Activated CD8-positive, alpha-beta memory T cell treated with anti-CD3 and anti-CD28 coated beads, Interleukin-2, amount 10 ng/mL, durations not matched to agents 7 days and 5 days (primary cell): ENCODE measurements at regions of chr1 and their contacts with region 1.

Region 1: GRCh38 chr1:8848663-8849386 is 29.7 kb downstream of the ENO1 start:
- DNase-seq: peak; percentile 82
- ATAC-seq: peak; percentile 94
- H3K4me3 Mint-ChIP-seq: no peak overlapping the region
- H3K27ac Mint-ChIP-seq: no peak overlapping the region
- H3K4me1 Mint-ChIP-seq: peaks cover 8% of the 10 kb centered on the region
- H3K27me3 Mint-ChIP-seq: peaks cover 2% of the 10 kb centered on the region

Region 2: DNA sequence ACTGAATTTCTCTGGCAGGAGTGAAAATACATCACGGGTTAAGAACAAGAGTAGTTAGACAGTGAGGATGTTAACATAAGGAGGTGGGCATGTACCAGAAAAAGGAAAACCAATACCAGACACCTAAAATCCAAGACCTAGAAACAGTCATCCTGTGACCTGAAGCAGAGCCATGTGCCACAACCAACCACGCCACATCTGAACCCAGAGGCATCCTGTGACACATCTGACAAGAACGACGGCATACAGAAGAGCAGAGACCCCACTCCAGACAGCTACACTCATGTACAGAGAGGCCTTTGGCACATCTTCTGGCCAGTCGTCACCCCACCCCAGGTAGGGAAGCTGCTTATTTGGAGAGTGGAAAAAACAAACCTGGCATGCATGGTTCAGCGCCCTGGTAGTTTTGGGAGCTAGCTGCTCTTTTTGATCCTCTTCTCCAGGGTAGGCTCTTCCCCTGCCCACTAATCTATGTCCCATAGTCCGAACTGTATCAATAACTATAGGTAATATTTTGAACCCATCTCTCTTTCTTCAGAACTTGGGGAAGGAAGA is 458.8 kb before region 1 on chr1:
- CTCF ChIA-PET with region 1: no interaction called
- DNase-seq: peak; percentile 65
- ATAC-seq: peak; percentile 71
- H3K4me3 Mint-ChIP-seq: no peak overlapping the region
- H3K27ac Mint-ChIP-seq: no peak overlapping the region
- H3K4me1 Mint-ChIP-seq: peaks cover 44% of the 10 kb centered on the region
- H3K27me3 Mint-ChIP-seq: no peaks in the 10 kb centered on the region

Region 3: DNA sequence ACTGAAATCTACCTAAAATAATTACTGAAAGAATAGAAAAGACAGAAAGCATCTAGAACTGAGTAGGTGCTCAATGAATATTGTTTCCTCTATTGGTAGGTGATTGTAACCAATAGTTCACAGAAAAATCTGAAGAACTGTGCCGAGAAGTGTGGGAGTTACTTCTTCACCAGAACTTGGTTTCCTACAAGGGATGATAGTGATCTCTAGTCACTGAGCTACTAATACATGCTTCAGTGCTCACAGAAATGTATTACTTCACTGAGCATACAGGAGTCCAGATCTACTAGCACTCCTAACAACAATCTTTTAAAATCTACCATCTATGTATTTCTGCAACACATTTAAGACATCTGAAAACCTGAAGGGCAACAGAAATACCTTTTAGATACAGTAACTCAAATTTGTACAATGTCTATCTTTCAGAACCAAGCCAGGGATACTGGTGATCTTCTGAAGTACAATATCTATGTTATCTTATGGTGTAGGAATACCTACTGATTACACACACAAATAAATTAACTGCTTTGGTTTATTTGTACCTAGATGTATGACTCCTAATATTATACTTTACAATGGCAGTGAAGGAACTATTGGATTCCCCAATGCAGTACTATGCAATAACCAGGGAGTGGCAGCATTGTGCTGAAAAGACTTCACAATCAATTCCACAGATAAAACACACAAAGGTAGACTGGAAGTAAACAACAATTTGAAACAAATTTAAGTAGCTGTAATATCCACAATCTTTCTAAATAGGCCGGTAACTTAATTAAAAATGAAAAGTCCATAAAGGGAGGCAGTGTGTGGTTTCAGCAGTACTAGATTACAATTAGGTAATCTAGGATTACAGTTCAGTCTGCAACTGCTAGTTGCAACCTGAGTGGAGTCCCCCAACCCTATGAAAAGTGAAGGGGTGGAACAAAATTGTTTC is 287.9 kb before region 1 on chr1:
- CTCF ChIA-PET with region 1: interaction called, 25 read pairs
- DNase-seq: no peak
- ATAC-seq: peak; percentile 80
- H3K4me3 Mint-ChIP-seq: no peak overlapping the region
- H3K27ac Mint-ChIP-seq: peak overlapping the region; percentile 12
- H3K4me1 Mint-ChIP-seq: peaks cover 17% of the 10 kb centered on the region
- H3K27me3 Mint-ChIP-seq: no peaks in the 10 kb centered on the region

Region 4: DNA sequence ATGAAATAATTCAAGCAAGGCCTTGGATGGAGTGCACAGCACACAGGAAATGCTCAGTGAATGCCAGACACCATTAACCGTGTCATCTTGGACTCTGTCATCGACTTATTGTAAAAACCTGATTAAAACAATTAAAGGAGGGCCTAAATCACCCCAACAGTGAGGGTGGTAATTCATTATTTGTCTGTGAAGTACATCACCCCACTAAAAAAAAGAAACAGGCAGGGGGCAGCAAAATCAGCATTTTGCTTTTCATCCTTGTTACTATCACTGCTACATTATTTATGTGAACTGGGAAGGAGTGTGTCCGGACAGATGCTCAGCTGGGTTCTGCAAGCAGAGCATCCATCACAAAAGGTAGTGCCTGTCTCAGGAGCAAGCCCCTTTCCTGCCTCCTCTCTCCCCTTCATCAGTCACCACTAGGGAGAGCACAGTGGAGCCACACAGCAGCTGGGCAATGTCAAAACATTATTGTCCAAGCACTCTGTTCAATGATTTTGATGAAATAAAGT is 129.9 kb before region 1 on chr1:
- CTCF ChIA-PET with region 1: interaction called, 12 read pairs
- DNase-seq: no peak
- ATAC-seq: no peak
- H3K4me3 Mint-ChIP-seq: no peak overlapping the region
- H3K27ac Mint-ChIP-seq: no peak overlapping the region
- H3K4me1 Mint-ChIP-seq: peaks cover 13% of the 10 kb centered on the region
- H3K27me3 Mint-ChIP-seq: no peaks in the 10 kb centered on the region

Region 5: GRCh38 chr1:8727809-8728213 is 121.0 kb before region 1 on chr1:
- CTCF ChIA-PET with region 1: interaction called, 20 read pairs
- DNase-seq: no peak
- ATAC-seq: no peak
- H3K4me3 Mint-ChIP-seq: no peak overlapping the region
- H3K27ac Mint-ChIP-seq: no peak overlapping the region
- H3K4me1 Mint-ChIP-seq: peaks cover 20% of the 10 kb centered on the region
- H3K27me3 Mint-ChIP-seq: no peaks in the 10 kb centered on the region

Region 6: GRCh38 chr1:8817406-8818324 is 31.2 kb before region 1 on chr1 and contains the start of gene RERE:
- CTCF ChIA-PET with region 1: interaction called, 17 read pairs
- DNase-seq: peak; percentile 95
- ATAC-seq: peak; percentile 96
- H3K4me3 Mint-ChIP-seq: peak within 1 kb of the TSS; percentile 91
- H3K27ac Mint-ChIP-seq: peak within 1 kb of the TSS; percentile 87
- H3K4me1 Mint-ChIP-seq: peaks cover 42% of the 10 kb centered on the region
- H3K27me3 Mint-ChIP-seq: peaks cover 13% of the 10 kb centered on the region
- total RNA-seq, gene RERE: 38.3 TPM

Region 7: DNA sequence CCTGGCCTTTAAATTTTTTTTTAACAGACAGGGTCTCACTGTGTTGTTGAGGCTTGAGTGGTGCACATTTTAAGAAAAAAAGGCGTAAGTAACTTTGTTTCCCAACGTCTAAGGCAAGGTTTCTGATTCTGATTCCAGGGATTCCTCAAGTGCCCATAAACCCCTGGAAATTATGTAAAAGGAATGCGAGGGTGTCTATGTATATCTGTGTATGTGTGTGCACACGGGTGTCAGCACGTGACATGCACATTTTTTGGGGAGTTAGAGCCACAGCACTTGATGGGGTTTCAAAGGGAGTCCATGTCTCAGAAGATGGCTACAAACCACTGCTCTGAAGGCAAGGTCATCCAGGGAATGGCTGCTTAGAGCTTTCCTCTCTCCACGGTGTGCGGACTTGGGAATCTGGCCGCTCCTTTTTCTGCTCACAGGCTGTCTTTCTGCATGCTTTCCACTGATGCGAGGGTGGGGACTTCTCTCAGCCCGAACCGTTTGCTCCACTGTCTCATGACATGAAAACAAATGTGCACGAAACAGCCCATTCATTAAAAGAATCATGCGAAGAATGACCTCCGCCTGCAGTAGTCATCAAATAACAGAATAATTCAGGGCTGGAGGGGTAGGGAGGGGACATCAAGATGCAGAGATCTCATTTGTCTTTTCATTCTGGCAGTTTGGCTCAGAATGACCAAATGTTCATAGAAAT is 12.7 kb before region 1 on chr1:
- CTCF ChIA-PET with region 1: interaction called, 20 read pairs
- DNase-seq: no peak
- ATAC-seq: no peak
- H3K4me3 Mint-ChIP-seq: no peak overlapping the region
- H3K27ac Mint-ChIP-seq: no peak overlapping the region
- H3K4me1 Mint-ChIP-seq: no peaks in the 10 kb centered on the region
- H3K27me3 Mint-ChIP-seq: peaks cover 15% of the 10 kb centered on the region

Region 8: DNA sequence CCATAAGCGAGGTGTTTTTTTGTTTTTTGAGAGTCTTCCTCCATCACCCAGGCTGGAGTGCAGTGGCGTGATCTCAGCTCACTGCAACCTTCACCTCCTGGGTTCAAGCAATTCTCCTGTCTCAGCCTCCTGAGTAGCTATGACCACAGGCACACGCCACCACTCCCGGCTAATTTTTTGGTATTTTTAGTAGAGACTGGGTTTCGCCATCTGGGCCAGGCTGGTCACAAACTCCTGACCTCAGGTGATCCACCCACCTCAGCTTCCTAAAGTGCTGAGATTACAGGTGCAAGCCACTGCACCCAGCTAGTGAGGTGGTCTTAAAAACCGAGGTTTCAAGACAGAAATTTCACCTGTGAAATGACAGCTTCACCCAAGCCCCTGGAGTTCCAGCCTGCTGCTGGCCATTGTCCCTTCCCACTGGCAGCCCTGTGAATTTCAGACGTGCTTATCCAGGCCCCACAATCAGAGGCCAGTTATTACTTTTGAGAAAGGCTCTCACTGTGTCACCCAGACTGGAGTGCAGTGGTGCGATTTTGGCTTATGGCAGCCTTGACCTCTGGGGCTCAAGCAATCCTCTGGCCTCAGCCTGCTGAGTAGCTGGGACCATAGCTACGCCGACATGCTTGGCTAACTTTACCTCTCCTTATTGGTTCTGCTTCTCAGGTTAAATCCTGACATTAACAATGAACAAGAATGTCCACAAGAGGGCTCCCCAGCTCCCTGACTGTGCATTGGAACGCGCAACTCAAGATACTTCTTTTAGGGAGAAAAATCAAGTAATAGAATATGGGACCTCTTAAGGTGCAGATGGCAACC is 10.3 kb after region 1 on chr1:
- CTCF ChIA-PET with region 1: interaction called, 86 read pairs
- DNase-seq: peak; percentile 68
- ATAC-seq: peak; percentile 48
- H3K4me3 Mint-ChIP-seq: peak overlapping the region; percentile 32
- H3K27ac Mint-ChIP-seq: peak overlapping the region; percentile 90
- H3K4me1 Mint-ChIP-seq: peaks cover 60% of the 10 kb centered on the region
- H3K27me3 Mint-ChIP-seq: no peaks in the 10 kb centered on the region